Gastrocnemius medialis (tissue), 4 donors: ENCODE measurements at regions of chr2 and their contacts with region 1.

Region 1: GRCh38 chr2:200901459-200902072 is 12.4 kb downstream of the NIF3L1 start:
- DNase-seq: peak; percentile 5 to 52
- ATAC-seq: peak; percentile 67 to 82
- H3K4me3 ChIP-seq: no peak overlapping the region
- H3K27ac ChIP-seq: no peak overlapping the region
- H3K4me1 ChIP-seq: peaks cover 0 to 10% of the 10 kb centered on the region in 2 donors
- H3K27me3 ChIP-seq: no peaks in the 10 kb centered on the region
- CTCF ChIP-seq: peak; percentile 43 to 69 (median 64)
- POLR2A ChIP-seq: no peak

Region 2: DNA sequence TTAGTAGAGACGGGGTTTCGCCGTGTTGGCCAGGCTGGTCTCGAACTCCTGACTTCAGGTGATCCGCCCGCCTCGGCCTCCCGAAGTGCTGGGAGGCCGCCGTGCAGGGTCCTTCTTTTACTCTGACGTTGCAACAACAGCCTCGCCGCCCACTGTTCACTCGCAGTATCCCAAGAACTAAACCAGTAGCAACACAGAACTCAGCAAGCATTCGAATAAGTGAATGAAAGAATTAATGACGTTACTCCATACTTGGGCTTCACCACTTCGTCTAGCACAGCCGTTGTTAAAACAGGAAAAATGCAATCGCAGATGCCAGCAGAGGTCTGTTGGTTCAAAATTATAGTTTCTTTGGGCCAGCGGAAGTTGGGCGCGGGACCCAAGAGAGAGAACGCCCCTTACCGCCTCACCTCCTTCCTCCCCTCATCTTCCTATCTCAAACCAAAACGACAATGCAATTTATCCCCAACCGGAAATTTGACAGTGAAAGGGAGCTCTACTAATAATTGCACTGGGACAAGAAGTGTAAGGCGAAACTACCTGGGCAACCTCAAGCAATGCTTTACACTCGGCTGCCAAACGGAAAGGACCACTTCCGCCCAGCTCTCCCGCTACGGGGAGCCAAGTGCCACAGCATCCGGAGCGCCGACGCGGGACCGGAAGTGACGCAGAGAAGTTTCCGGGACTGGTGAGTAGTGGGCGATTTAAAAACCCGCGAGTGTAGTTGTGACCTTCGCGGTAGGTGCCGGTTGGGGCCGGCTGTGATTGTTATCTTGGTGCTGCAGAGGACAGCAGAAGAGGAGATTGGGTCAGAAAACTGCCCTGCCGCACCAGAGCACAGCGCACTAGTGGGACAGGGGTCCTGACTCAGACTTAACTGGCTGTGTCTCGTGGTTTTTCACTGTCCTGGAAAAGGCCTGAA is 12.6 kb before region 1 on chr2 and contains the starts of genes NIF3L1 and PPIL3:
- in situ Hi-C with region 1: no loop called
- intact Hi-C with region 1: no loop called
- DNase-seq: peak; percentile 90 to 93
- ATAC-seq: peak; percentile 95 to 97
- H3K4me3 ChIP-seq: peak within 1 kb of the TSS; percentile 60 to 91 (median 74)
- H3K27ac ChIP-seq: peak within 1 kb of the TSS; percentile 90 to 94 (median 94)
- H3K4me1 ChIP-seq: peaks cover 13 to 22% of the 10 kb centered on the region in 2 donors
- H3K27me3 ChIP-seq: no peaks in the 10 kb centered on the region
- CTCF ChIP-seq: no peak
- POLR2A ChIP-seq: peak; percentile 50 to 57
- total RNA-seq, gene NIF3L1: 17.0 to 28.7 (median 22.4) TPM
- total RNA-seq, gene PPIL3: 8.4 to 29.2 (median 14.3) TPM

Region 3: GRCh38 chr2:201059961-201060755 is 158.6 kb after region 1 on chr2:
- in situ Hi-C with region 1: loop called in 1 of 4 experiments (anchors 10 kb)
- intact Hi-C with region 1: no loop called
- DNase-seq: no peak
- ATAC-seq: no peak
- H3K4me3 ChIP-seq: no peak overlapping the region
- H3K27ac ChIP-seq: no peak overlapping the region
- H3K4me1 ChIP-seq: peaks cover 23 to 30% of the 10 kb centered on the region in 2 donors
- H3K27me3 ChIP-seq: no peaks in the 10 kb centered on the region
- CTCF ChIP-seq: no peak
- POLR2A ChIP-seq: no peak

Region 4: GRCh38 chr2:201084863-201085262 is 183.3 kb after region 1 on chr2:
- in situ Hi-C with region 1: no loop called
- intact Hi-C with region 1: no loop called
- DNase-seq: no peak
- ATAC-seq: no peak
- H3K4me3 ChIP-seq: no peak overlapping the region
- H3K27ac ChIP-seq: no peak overlapping the region
- H3K4me1 ChIP-seq: no peaks in the 10 kb centered on the region
- H3K27me3 ChIP-seq: no peaks in the 10 kb centered on the region
- CTCF ChIP-seq: no peak
- POLR2A ChIP-seq: no peak

Region 5: GRCh38 chr2:201171259-201171814 is 269.8 kb after region 1 on chr2:
- in situ Hi-C with region 1: no loop called
- intact Hi-C with region 1: loop called (anchors 2 kb)
- DNase-seq: no peak
- ATAC-seq: no peak
- H3K4me3 ChIP-seq: no peak overlapping the region
- H3K27ac ChIP-seq: peak overlapping the region in 1 of 4 donors; percentile 23
- H3K4me1 ChIP-seq: no peaks in the 10 kb centered on the region
- H3K27me3 ChIP-seq: no peaks in the 10 kb centered on the region
- CTCF ChIP-seq: no peak
- POLR2A ChIP-seq: no peak

Region 6: GRCh38 chr2:201182650-201183364 is 281.2 kb after region 1 on chr2 and contains the start of gene CASP10:
- in situ Hi-C with region 1: loop called in 2 of 4 experiments (anchors 10 kb)
- intact Hi-C with region 1: no loop called
- DNase-seq: no peak
- ATAC-seq: peak in 1 of 2 donors; percentile 31
- H3K4me3 ChIP-seq: peak within 1 kb of the TSS; percentile 31 to 54 (median 36)
- H3K27ac ChIP-seq: peak within 1 kb of the TSS in 3 of 4 donors; percentile 50 to 61 (median 54)
- H3K4me1 ChIP-seq: no peaks in the 10 kb centered on the region
- H3K27me3 ChIP-seq: no peaks in the 10 kb centered on the region
- CTCF ChIP-seq: peak in 2 of 5 experiments; percentile 16 to 27
- POLR2A ChIP-seq: peak in 1 of 2 donors; percentile 26
- total RNA-seq, gene CASP10: 2.4 to 7.3 (median 3.6) TPM

Region 7: GRCh38 chr2:201231781-201232466 is 330.4 kb after region 1 on chr2:
- in situ Hi-C with region 1: no loop called
- intact Hi-C with region 1: loop called (anchors 5 kb)
- DNase-seq: peak; percentile 54 to 71
- ATAC-seq: peak; percentile 62 to 77
- H3K4me3 ChIP-seq: no peak overlapping the region
- H3K27ac ChIP-seq: no peak overlapping the region
- H3K4me1 ChIP-seq: peaks cover 8 to 14% of the 10 kb centered on the region in 2 donors
- H3K27me3 ChIP-seq: no peaks in the 10 kb centered on the region
- CTCF ChIP-seq: peak; percentile 55 to 74 (median 67)
- POLR2A ChIP-seq: no peak